ENCODE measurements at regions of chr3 and their contacts with region 1.

Region 1: GRCh38 chr3:198080521-198081280 is 120.7 kb downstream of the LMLN start:
- DNase-seq: peak; percentile 74 to 90 (median 84)
- ATAC-seq: peak; percentile 95
- H3K4me3 ChIP-seq: peak overlapping the region; percentile 61
- H3K4me3 Mint-ChIP-seq: peak overlapping the region; percentile 52 to 87 (median 79)
- H3K27ac ChIP-seq: no peak overlapping the region
- H3K27ac Mint-ChIP-seq: peak overlapping the region in 2 of 9 donors; percentile 55 to 56
- H3K4me1 ChIP-seq: peaks cover 0 to 5% of the 10 kb centered on the region in 2 donors
- H3K4me1 Mint-ChIP-seq: peaks cover 0 to 12% (median 6%) of the 10 kb centered on the region in 7 donors
- H3K27me3 ChIP-seq: peaks cover 3 to 21% of the 10 kb centered on the region in 2 donors
- H3K27me3 Mint-ChIP-seq: peaks cover 19 to 64% (median 43%) of the 10 kb centered on the region in 5 donors

Region 2: GRCh38 chr3:197906023-197906849 is 174.5 kb before region 1 on chr3:
- CTCF ChIA-PET with region 1: no interaction called
- POLR2A ChIA-PET with region 1: no interaction called
- intact Hi-C with region 1: loop called in 1 of 2 experiments (anchors 5 kb)
- DNase-seq: peak; percentile 38 to 79 (median 62)
- ATAC-seq: peak; percentile 91
- H3K4me3 ChIP-seq: no peak overlapping the region
- H3K4me3 Mint-ChIP-seq: peak overlapping the region in 2 of 10 donors; percentile 4 to 58
- H3K27ac ChIP-seq: no peak overlapping the region
- H3K27ac Mint-ChIP-seq: peak overlapping the region in 1 of 9 donors; percentile 15
- H3K4me1 ChIP-seq: peaks cover 0 to 6% of the 10 kb centered on the region in 2 donors
- H3K4me1 Mint-ChIP-seq: peaks cover 0 to 10% (median 3%) of the 10 kb centered on the region in 7 donors
- H3K27me3 ChIP-seq: no peaks in the 10 kb centered on the region
- H3K27me3 Mint-ChIP-seq: peaks cover 0 to 4% (median 0%) of the 10 kb centered on the region in 5 donors

Region 3: GRCh38 chr3:197959898-197960693 is 120.6 kb before region 1 on chr3 and contains the start of gene LMLN:
- CTCF ChIA-PET with region 1: no interaction called
- POLR2A ChIA-PET with region 1: no interaction called
- intact Hi-C with region 1: loop called (anchors 1 to 2 kb)
- DNase-seq: peak; percentile 93 to 96 (median 95)
- ATAC-seq: peak; percentile 98
- H3K4me3 ChIP-seq: peak within 1 kb of the TSS; percentile 91
- H3K4me3 Mint-ChIP-seq: peak within 1 kb of the TSS; percentile 86 to 98 (median 92)
- H3K27ac ChIP-seq: peak within 1 kb of the TSS; percentile 86
- H3K27ac Mint-ChIP-seq: peak within 1 kb of the TSS; percentile 92 to 97 (median 96)
- H3K4me1 ChIP-seq: peaks cover 26 to 27% of the 10 kb centered on the region in 2 donors
- H3K4me1 Mint-ChIP-seq: peaks cover 33 to 74% (median 48%) of the 10 kb centered on the region in 7 donors
- H3K27me3 ChIP-seq: no peaks in the 10 kb centered on the region
- H3K27me3 Mint-ChIP-seq: peaks cover 0 to 2% (median 0%) of the 10 kb centered on the region in 5 donors
- total RNA-seq, gene LMLN: 4.2 to 10.9 (median 6.8) TPM